Activated B cell treated with CpG ODN at 0.5 μM for 24 hours (primary cell): ENCODE measurements at regions of chr5 and their contacts with region 1.

Region 1: DNA sequence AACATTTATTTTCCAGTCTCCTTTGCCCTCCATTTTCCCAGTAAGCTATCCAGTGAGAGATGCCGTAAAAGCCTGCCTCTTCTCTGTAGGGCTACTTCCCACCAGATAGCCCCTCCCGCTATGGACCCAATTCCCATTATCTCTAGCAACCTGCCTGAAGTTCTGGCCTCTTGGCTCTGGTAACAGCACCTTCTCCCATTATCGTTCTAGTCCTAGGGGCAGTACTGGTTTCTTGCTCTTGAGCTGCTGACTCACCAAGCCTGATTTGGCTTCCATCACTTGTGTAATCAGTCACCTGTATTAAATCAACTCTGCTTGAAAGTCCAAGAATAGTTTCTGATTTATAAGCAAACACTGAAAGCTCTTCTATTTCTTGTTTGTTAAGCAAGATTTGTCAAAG is 42.8 kb upstream of the PARP8 start:
- DNase-seq: no peak
- ATAC-seq: no peak
- H3K4me3 Mint-ChIP-seq: no peak overlapping the region
- H3K27ac Mint-ChIP-seq: no peak overlapping the region
- H3K4me1 Mint-ChIP-seq: no peaks in the 10 kb centered on the region
- H3K27me3 Mint-ChIP-seq: no peaks in the 10 kb centered on the region
- CTCF ChIP-seq: no peak

Region 2: DNA sequence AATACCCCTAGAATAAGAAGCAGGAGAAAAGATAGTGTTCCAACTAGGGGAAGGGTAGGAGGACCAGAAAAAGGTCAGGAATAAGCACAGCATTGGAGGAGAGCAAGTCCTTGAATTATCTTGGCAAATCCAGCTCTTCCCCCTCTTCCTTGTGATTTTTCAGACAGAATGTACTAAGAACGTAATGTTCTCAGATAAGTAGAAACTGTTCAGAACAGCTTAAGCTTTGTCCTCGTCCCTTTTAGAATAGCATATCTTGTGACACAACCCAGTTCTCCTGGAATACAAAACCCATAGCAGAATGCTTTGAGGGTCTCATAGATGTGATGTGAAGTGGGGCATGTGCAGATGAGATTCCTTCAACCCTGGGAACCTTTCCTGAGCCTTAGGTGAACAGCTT is 280.0 kb before region 1 on chr5:
- CTCF ChIA-PET with region 1: no interaction called
- POLR2A ChIA-PET with region 1: no interaction called
- intact Hi-C with region 1: no loop called
- DNase-seq: no peak
- ATAC-seq: no peak
- H3K4me3 Mint-ChIP-seq: no peak overlapping the region
- H3K27ac Mint-ChIP-seq: no peak overlapping the region
- H3K4me1 Mint-ChIP-seq: no peaks in the 10 kb centered on the region
- H3K27me3 Mint-ChIP-seq: no peaks in the 10 kb centered on the region
- CTCF ChIP-seq: no peak

Region 3: DNA sequence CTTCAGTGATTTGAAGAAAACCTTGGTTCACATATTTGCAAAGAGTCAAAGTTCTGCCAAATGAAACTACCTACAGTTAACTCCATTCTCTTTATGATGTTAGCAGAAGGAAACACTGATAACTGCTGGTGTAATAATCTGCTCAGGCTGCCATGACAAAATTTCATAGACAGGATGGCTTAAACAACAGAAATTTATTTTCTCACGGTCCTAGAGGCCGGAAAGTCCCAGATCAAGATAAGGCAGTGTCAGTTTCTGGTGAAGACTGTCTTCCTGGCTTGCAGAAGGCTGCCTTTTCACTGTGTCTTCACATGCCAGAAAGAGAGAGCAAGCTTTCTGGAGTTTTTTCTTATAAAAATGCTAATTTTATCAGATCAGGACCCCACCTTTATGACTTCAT is 59.6 kb before region 1 on chr5:
- CTCF ChIA-PET with region 1: no interaction called
- POLR2A ChIA-PET with region 1: no interaction called
- intact Hi-C with region 1: loop called (anchors 10 kb)
- DNase-seq: no peak
- ATAC-seq: no peak
- H3K4me3 Mint-ChIP-seq: no peak overlapping the region
- H3K27ac Mint-ChIP-seq: no peak overlapping the region
- H3K4me1 Mint-ChIP-seq: peaks cover 10% of the 10 kb centered on the region
- H3K27me3 Mint-ChIP-seq: no peaks in the 10 kb centered on the region
- CTCF ChIP-seq: no peak